ENCODE measurements at regions of chr9 and their contacts with region 1.

Region 1: DNA sequence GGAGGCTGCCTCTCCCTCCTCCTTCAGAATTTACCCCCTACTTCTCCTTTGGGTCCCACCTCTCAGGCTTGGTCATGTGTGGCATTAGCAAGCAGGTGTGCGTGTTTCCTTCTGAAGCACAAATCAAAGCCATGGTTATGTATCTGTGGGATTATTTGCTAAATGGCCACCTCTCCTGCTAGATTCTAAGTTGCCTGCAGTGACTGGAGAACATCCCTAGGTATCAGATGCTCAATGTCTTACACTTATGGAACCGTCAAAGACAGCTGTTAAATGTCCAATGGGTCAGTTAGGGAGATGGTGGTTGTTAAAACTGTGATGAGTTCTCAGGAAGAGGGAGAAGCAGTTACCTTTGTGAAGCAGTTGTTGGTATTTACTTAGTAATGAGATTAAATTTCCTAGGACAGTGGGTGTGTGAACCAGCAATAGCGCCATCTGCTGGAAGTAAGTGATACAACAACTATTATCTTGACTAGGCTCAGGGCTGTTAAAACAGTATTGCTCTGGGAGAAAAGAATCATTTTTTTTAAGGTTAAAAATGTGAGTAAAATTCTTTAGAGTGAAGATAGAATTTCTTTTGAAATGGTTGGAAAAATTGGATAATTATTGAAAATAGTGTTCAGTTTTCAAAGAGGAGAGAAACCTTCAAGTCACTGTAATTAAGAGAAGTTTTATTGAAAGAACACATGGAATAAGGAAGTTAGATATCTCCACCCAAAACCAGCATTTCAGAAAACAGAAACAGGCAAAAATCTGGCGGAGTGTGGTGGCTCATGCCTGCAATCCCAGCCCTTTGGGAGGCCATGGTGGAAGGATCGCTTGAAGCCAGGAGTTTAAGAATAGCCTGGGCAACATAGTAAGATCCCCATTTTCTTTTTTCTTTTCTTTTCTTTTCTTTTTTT is 71.3 kb downstream of the TMC1 start:
- DNase-seq: peak in 1 of 5 donors; percentile 58
- H3K4me3 ChIP-seq: no peak overlapping the region
- H3K27ac ChIP-seq: no peak overlapping the region
- H3K4me1 ChIP-seq: no peaks in the 10 kb centered on the region
- H3K27me3 ChIP-seq: no peaks in the 10 kb centered on the region
- CTCF ChIP-seq: peak; percentile 74 to 93 (median 91)
- EP300 ChIP-seq: no peak
- POLR2A ChIP-seq: no peak

Region 2: GRCh38 chr9:72280913-72281500 is 311.7 kb before region 1 on chr9:
- intact Hi-C with region 1: loop called in 2 of 4 experiments (anchors 5 kb)
- DNase-seq: peak; percentile 57 to 80 (median 75)
- H3K4me3 ChIP-seq: no peak overlapping the region
- H3K27ac ChIP-seq: no peak overlapping the region
- H3K4me1 ChIP-seq: no peaks in the 10 kb centered on the region
- H3K27me3 ChIP-seq: no peaks in the 10 kb centered on the region
- CTCF ChIP-seq: peak; percentile 59 to 82 (median 77)
- EP300 ChIP-seq: no peak
- POLR2A ChIP-seq: no peak

Region 3: DNA sequence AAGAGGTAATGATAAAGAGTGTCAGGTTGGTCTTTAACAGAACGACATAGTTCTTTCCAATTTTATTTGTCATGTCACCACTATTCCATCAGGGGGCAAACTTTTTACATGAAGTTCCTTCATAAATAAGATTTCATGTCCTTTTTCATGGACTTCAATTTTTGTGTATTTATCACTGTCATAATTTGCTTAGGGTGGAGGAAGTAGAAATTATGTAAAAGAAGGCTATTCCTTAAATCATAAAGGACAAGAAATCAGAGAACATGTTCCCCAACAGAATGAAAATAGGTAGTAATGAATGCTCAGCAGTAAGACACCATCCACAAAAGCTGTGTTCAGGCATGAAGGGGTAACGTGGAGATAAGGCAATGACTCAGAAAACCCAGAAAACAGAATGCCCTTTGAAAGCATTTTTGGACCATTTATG is 300.5 kb before region 1 on chr9:
- intact Hi-C with region 1: loop called in 1 of 4 experiments (anchors 5 kb)
- DNase-seq: no peak
- H3K4me3 ChIP-seq: no peak overlapping the region
- H3K27ac ChIP-seq: no peak overlapping the region
- H3K4me1 ChIP-seq: peaks cover 2% of the 10 kb centered on the region
- H3K27me3 ChIP-seq: no peaks in the 10 kb centered on the region
- CTCF ChIP-seq: peak; percentile 13 to 49 (median 36)
- EP300 ChIP-seq: no peak
- POLR2A ChIP-seq: no peak

Region 4: DNA sequence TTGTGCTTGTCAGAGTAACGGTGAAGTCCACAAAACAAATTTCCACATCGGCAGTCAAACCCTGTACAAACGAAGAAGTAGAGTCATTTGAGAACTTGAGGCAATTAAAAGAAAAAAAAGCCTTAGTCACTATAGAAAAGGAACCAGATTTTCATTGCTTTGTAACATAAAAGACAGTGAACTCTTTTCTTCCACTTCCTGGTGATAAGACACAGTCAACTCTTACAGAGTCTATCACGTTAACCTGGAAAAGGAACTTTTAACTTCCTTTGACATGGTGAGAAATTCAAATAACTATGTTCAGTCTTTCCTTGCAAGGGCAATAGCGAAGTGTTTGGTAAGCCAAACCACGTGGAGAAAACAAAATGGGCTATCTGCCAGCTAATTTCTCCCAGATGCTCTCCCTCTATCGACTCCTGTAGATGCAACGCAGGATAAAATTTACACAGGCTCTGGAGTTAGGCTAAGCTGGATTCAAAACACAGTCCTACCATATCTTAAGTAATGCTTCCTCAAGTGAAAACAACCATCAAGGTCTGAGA is 236.6 kb before region 1 on chr9:
- intact Hi-C with region 1: loop called in 1 of 4 experiments (anchors 5 kb)
- DNase-seq: no peak
- H3K4me3 ChIP-seq: no peak overlapping the region
- H3K27ac ChIP-seq: no peak overlapping the region
- H3K4me1 ChIP-seq: no peaks in the 10 kb centered on the region
- H3K27me3 ChIP-seq: no peaks in the 10 kb centered on the region
- CTCF ChIP-seq: no peak
- EP300 ChIP-seq: no peak
- POLR2A ChIP-seq: no peak

Region 5: DNA sequence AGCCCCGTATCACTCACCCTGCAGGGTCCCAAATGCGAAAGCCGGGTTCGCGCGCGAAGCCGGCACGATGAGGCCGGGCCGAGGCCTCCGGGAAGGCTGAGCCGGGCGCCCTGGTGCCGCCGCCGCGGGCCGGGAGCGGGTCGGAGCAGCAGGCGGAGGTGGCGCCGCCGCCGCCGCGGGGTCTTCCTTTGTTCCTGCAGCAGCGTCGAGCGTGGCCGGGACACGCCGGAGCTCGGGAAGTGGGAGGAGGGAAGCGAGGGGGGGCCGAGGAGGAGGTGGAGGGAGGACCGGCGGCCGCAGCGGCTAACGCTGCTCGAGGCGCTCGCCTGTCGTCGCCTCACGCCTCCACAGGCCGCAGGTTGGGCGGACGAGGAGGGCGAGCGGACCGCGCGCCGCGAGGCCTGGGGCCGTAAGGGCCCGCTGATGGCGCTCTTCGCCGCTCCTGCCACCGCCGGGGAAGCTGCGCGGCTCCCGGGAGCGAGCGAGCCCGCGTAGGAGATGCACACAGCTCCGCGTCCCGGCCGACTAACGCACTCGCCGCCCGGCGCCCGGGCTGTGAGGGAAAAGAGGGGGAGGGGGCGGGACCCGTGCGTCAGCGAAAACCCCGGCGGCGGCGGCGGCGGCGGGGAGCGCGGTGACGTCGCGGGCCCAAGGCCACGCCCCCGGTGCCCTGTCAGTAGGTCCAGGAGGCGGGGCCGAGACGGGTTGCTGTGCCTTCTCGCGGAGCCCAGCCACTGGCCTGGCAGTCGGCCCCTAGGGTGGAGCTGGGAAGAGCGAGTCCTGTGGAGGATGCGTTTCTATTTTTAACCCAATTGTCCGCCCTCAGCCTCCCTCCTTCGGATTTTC is 227.9 kb before region 1 on chr9 and contains the start of gene ZFAND5:
- intact Hi-C with region 1: loop called in 1 of 4 experiments (anchors 5 kb)
- DNase-seq: peak; percentile 98 to 99 (median 99)
- H3K4me3 ChIP-seq: peak within 1 kb of the TSS; percentile 94
- H3K27ac ChIP-seq: peak within 1 kb of the TSS; percentile 99 to 100
- H3K4me1 ChIP-seq: no peaks in the 10 kb centered on the region
- H3K27me3 ChIP-seq: no peaks in the 10 kb centered on the region
- CTCF ChIP-seq: peak in 2 of 3 donors; percentile 23 to 37
- EP300 ChIP-seq: peak; percentile 58
- POLR2A ChIP-seq: peak; percentile 99
- total RNA-seq, gene ZFAND5: 198 to 904 (median 321) TPM

Region 6: DNA sequence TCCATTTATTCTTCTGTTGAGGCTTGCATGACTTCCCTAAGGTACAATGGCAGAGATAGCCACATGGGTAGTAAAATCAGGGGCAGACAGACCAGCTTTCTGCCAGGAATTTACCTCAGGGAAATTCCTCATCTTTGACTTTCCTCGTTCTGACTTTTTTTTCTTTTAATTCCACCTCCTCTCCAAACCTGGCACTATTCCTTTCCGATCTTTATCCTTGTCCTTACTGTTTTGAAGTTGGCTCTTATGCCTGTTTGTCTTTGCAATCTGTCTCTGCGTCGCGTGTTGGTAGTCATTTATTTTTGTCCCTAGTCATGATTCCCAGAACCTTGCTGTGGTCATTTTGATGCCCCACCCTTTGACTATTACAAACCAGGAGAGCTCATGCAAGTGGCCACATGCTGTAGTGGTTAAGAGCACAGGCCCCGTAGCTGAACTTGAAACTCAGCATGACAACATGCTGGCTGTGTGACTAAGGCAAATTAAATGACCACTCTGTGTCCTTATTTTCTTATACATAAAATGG is 52.3 kb before region 1 on chr9:
- intact Hi-C with region 1: no loop called
- DNase-seq: no peak
- H3K4me3 ChIP-seq: no peak overlapping the region
- H3K27ac ChIP-seq: no peak overlapping the region
- H3K4me1 ChIP-seq: no peaks in the 10 kb centered on the region
- H3K27me3 ChIP-seq: no peaks in the 10 kb centered on the region
- CTCF ChIP-seq: no peak
- EP300 ChIP-seq: no peak
- POLR2A ChIP-seq: no peak